GM10248 (cell line): ENCODE measurements at regions of chr20 and their contacts with region 1.

Region 1: GRCh38 chr20:59032023-59032712 is at the start of gene ATP5F1E:
- DNase-seq: peak; percentile 98
- CTCF ChIP-seq: no peak

Region 2: GRCh38 chr20:58888521-58889333 is 143.4 kb before region 1 on chr20:
- CTCF ChIA-PET with region 1: interaction called, 5 read pairs
- POLR2A ChIA-PET with region 1: interaction called, 11 read pairs
- DNase-seq: peak; percentile 87
- CTCF ChIP-seq: no peak

Region 3: GRCh38 chr20:59006864-59007664 is 25.1 kb before region 1 on chr20 and contains the start of gene CTSZ:
- CTCF ChIA-PET with region 1: interaction called, 6 read pairs
- POLR2A ChIA-PET with region 1: interaction called, 11 read pairs
- DNase-seq: peak; percentile 83
- CTCF ChIP-seq: no peak

Region 4: GRCh38 chr20:59016795-59017492 is 15.2 kb before region 1 on chr20:
- CTCF ChIA-PET with region 1: interaction called, 10 read pairs
- POLR2A ChIA-PET with region 1: interaction called, 3 read pairs
- DNase-seq: no peak
- CTCF ChIP-seq: no peak

Region 5: DNA sequence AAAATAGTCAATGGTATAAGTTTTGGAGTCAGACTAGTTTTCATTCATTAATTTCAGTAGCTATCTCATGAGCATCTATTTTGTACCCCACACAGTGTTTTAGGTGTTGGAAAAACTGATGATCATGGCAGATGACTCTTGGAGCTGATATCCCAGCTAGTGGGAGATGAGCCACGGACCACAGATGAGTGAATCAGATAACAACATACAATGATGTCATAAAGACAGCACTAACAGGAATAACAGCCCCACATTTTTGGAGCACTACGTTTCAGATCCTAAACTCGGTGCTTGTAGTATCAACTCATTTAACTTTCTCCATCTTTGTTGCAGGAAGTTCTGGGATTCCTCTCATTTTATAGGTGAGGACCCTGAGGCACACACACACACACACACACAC is 200.4 kb after region 1 on chr20:
- CTCF ChIA-PET with region 1: no interaction called
- POLR2A ChIA-PET with region 1: no interaction called
- DNase-seq: no peak
- CTCF ChIP-seq: no peak